HEK293T (cell line): ENCODE measurements at regions of chr5 and their contacts with region 1.

Region 1: GRCh38 chr5:148730943-148731861 is 76.9 kb upstream of the HTR4 start:
- DNase-seq: peak; percentile 60

Region 2: DNA sequence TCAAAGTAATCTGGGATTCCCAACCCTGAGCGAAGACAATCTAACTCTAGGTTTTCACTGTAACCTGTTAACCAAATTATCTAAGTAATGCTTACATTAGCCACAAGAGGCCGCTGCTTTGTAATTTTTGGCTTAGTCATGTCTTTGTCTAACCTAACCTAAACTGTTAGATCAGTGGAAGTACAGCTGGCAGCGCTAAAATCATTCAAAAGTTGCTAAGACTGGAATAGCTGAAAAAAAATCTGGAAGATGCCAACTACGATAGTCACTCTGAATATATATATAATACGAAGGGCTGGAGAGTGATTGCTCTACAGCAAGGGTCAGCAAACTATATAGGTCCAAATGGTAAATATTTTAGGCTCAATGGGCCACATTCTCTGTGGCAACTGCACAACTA is 287.2 kb before region 1 on chr5:
- CTCF ChIA-PET with region 1: interaction called, 49 read pairs
- POLR2A ChIA-PET with region 1: interaction called, 3 read pairs
- DNase-seq: peak; percentile 45

Region 3: DNA sequence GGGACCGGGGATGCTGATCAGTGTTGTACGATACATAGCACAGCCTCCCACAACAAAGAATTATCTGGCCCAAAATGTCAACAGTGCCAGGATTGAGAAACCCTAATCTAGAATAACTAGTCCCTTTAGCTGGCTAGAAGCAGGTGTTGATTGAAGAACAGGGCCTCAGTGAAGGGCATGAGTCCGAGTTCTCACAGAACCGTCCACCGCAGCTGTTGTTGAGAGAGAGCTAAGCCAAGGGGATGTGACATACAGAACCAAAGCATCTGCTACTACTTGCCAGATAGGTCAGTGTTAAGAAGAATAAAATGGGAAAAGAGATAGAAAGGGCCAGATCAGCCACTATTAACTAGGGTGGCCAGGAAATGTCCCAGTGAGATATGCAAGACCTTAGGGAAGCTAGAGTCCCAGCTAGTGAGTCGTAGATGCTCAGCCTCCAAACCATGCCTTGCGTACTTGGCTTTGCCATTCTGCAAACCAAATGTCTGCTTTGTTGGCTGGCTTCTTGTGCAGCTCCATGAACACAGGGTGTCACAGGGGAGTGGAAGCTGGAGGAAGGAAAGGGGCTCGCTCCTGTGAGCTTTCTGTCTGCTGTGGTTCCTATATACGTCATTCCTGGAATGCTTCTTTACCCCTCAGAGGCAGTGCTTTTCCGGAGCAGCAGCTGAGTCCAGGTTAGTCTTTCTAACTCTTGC is 278.6 kb before region 1 on chr5:
- CTCF ChIA-PET with region 1: interaction called, 17 read pairs
- POLR2A ChIA-PET with region 1: no interaction called
- DNase-seq: no peak

Region 4: DNA sequence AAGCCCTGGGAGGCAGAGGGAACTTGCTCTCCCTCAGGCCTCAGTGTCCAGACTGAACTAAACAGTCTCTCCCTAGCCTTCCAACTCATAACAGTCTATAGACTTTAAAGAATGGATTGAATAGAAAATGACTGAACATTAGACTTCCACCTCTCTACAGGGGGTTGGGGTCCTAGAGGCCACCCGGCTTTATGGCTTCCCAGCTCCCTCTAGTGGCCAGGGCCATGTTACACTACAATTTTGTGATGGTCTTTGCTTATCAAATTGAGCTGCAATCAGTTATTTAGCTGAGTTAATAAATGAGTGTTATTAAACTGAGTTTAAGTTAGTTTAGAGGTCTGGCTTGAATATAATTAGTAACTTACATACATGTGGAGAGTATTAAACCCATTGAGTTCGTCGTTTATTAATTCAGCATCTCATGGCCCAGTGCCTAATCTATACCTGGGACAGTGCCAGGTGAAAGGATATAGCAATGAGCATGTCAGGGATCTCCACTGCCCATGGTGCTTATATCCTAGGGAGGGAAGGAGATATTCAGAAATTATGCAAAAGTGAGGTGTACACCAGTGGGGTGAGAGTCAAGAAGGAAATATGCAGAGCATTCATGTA is 226.5 kb after region 1 on chr5:
- CTCF ChIA-PET with region 1: interaction called, 81 read pairs
- POLR2A ChIA-PET with region 1: no interaction called
- DNase-seq: peak; percentile 67

Region 5: DNA sequence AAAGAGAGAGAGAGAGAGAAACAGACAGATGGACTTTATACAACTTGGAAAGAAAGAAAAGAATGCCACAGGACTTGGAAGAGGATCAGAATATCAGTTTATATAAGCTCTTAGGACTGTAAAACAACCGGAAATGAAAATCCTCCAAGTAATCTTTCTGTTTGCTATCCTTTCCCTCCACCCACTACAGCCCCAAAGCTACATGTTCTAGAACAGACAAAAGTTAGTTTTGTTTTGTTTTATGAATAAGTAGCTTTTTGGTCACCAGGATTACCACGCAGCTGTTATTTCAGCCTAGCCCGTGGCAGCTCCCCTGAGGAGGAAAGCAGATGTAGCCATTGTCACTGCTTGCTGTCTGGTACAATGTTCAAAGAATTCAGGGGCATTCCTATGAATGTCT is 265.1 kb after region 1 on chr5:
- CTCF ChIA-PET with region 1: interaction called, 12 read pairs
- POLR2A ChIA-PET with region 1: no interaction called
- DNase-seq: no peak

Region 6: GRCh38 chr5:149035372-149035790 is 304.2 kb after region 1 on chr5:
- CTCF ChIA-PET with region 1: interaction called, 41 read pairs
- POLR2A ChIA-PET with region 1: no interaction called
- DNase-seq: peak; percentile 72

Region 7: GRCh38 chr5:149114403-149115312 is 383.5 kb after region 1 on chr5:
- CTCF ChIA-PET with region 1: interaction called, 24 read pairs
- POLR2A ChIA-PET with region 1: no interaction called
- DNase-seq: peak; percentile 66